ENCODE measurements at regions of chr17 and their contacts with region 1.

Region 1: DNA sequence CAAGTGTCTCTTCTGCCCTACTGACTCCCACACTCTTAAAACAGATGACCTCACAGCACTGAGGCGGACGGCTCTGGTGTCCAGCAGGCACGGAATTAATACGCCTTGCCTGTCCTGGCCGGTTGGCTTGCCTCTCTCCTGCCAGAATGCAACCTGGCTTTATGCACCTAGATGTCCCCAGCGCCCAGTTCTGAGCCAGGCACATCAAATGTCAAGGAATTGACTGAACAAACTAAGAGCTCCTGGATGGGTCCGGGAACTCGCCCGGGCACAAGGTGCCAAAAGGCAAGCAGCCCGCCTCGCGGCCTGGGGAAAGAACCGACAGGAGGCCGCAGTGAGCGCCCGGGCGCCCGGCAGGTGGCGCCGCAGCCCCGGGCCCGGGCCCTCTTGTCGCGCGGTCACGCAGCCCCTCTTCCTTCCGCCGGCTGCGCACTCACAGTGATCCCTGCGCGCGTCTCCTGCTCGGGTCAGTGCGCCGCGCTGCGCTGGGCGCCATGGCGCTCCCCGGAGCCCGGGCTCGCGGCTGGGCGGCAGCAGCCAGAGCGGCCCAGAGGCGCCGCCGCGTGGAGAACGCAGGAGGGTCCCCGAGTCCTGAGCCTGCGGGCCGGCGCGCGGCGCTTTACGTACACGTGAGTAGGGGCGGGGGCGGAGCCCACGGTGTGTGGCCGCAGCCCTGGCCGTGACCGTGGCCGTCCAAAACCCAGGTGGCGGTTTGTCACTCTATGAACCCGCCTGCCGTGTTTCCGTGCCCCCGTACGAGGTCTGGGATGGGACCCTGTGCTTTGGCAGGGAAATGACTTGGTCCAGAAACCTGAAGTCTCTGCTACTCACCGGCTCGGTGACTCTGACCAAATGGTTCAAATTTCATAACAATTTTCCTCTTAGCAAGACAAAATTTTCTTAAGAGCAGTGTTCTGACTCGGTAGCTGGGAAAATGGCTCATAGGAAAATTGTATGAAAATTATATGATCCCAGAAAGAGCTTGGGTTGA is at the start of gene RSAD1:
- DNase-seq: peak; percentile 72 to 84 (median 79)
- ATAC-seq: peak; percentile 95
- H3K4me3 ChIP-seq: peak within 1 kb of the TSS; percentile 98
- H3K4me3 Mint-ChIP-seq: peak within 1 kb of the TSS; percentile 79 to 93 (median 90)
- H3K27ac ChIP-seq: peak within 1 kb of the TSS; percentile 75
- H3K27ac Mint-ChIP-seq: peak within 1 kb of the TSS; percentile 68 to 96 (median 92)
- H3K4me1 ChIP-seq: peaks cover 11 to 12% of the 10 kb centered on the region in 2 donors
- H3K4me1 Mint-ChIP-seq: peaks cover 19 to 28% (median 23%) of the 10 kb centered on the region in 7 donors
- H3K27me3 ChIP-seq: no peaks in the 10 kb centered on the region
- H3K27me3 Mint-ChIP-seq: peaks cover 0 to 6% (median 0%) of the 10 kb centered on the region in 5 donors
- total RNA-seq, gene RSAD1: 38.3 to 91.0 (median 54.6) TPM

Region 2: DNA sequence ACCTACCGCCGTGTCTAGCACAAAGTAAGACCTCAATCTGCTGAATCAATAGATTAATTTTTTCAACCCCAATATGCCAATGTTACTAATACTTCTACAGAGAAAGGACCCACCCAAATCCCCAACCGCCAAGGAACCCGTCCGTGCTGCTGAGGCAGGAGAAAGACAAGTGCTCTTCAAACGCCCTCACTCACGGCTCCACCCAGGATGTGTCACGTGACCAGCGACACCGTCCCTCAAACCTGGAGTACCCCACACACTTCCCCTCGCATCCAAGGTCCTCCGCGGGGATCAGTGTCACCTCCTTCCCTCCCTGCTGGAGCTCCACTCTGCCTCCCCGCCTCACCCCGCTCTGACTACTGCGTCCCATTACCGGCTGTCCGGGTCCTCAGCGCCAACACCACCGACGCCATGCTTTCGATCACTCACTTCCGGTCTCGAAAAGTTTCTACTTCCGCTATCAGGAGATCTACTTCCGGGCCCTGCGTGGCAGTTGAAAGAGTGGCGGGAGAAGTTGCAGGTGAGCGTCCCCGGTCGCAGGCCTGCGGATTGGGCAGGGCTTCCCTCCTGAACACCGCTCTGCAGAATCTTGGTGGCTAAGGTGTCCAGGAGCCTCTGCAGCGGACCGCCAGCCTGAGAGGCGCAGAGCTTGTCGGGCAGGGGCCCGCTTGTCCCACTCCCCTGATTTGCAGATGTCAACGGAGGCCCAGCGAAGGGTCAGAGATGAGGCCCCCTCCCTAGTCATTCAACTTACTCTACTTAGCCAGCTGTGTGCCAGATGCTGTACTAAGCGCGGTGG is 105.7 kb before region 1 on chr17 and contains the starts of genes EME1 and MRPL27:
- CTCF ChIA-PET with region 1: no interaction called
- POLR2A ChIA-PET with region 1: no interaction called
- intact Hi-C with region 1: loop called in 1 of 2 experiments (anchors 1 kb)
- DNase-seq: peak; percentile 81 to 95 (median 92)
- ATAC-seq: peak; percentile 94
- H3K4me3 ChIP-seq: peak within 1 kb of the TSS; percentile 99
- H3K4me3 Mint-ChIP-seq: peak within 1 kb of the TSS; percentile 92 to 100 (median 98)
- H3K27ac ChIP-seq: peak within 1 kb of the TSS; percentile 99
- H3K27ac Mint-ChIP-seq: peak within 1 kb of the TSS; percentile 97 to 100 (median 99)
- H3K4me1 ChIP-seq: peaks cover 9 to 13% of the 10 kb centered on the region in 2 donors
- H3K4me1 Mint-ChIP-seq: peaks cover 18 to 41% (median 31%) of the 10 kb centered on the region in 7 donors
- H3K27me3 ChIP-seq: no peaks in the 10 kb centered on the region
- H3K27me3 Mint-ChIP-seq: no peaks in the 10 kb centered on the region
- total RNA-seq, gene EME1: 0.61 to 17.5 (median 2.2) TPM
- total RNA-seq, gene MRPL27: 29.5 to 64.7 (median 32.0) TPM

Region 3: GRCh38 chr17:50501054-50501453 is 22.4 kb after region 1 on chr17:
- CTCF ChIA-PET with region 1: interaction called, 13 read pairs
- POLR2A ChIA-PET with region 1: interaction called, 5 read pairs
- intact Hi-C with region 1: loop called (anchors 1 kb)
- DNase-seq: peak in 1 of 9 donors; percentile 18
- ATAC-seq: no peak
- H3K4me3 ChIP-seq: no peak overlapping the region
- H3K4me3 Mint-ChIP-seq: no peak overlapping the region
- H3K27ac ChIP-seq: no peak overlapping the region
- H3K27ac Mint-ChIP-seq: no peak overlapping the region
- H3K4me1 ChIP-seq: peaks cover 0 to 8% of the 10 kb centered on the region in 2 donors
- H3K4me1 Mint-ChIP-seq: peaks cover 0 to 23% (median 13%) of the 10 kb centered on the region in 7 donors
- H3K27me3 ChIP-seq: no peaks in the 10 kb centered on the region
- H3K27me3 Mint-ChIP-seq: peaks cover 0 to 3% (median 0%) of the 10 kb centered on the region in 5 donors

Region 4: GRCh38 chr17:50547035-50547735 is 68.5 kb after region 1 on chr17 and contains the start of gene SPATA20:
- CTCF ChIA-PET with region 1: interaction called, 5 read pairs
- POLR2A ChIA-PET with region 1: interaction called, 3 read pairs
- intact Hi-C with region 1: loop called (anchors 1 kb)
- DNase-seq: peak; percentile 73 to 86 (median 83)
- ATAC-seq: peak; percentile 90
- H3K4me3 ChIP-seq: peak within 1 kb of the TSS; percentile 65
- H3K4me3 Mint-ChIP-seq: peak within 1 kb of the TSS; percentile 52 to 85 (median 76)
- H3K27ac ChIP-seq: peak within 1 kb of the TSS; percentile 66
- H3K27ac Mint-ChIP-seq: peak within 1 kb of the TSS in 5 of 9 donors; percentile 37 to 87 (median 81)
- H3K4me1 ChIP-seq: peaks cover 11% of the 10 kb centered on the region in 2 donors
- H3K4me1 Mint-ChIP-seq: peaks cover 0 to 25% (median 20%) of the 10 kb centered on the region in 7 donors
- H3K27me3 ChIP-seq: no peaks in the 10 kb centered on the region
- H3K27me3 Mint-ChIP-seq: peaks cover 0 to 28% (median 7%) of the 10 kb centered on the region in 5 donors
- total RNA-seq, gene SPATA20: 14.3 to 19.4 (median 16.4) TPM

Region 5: DNA sequence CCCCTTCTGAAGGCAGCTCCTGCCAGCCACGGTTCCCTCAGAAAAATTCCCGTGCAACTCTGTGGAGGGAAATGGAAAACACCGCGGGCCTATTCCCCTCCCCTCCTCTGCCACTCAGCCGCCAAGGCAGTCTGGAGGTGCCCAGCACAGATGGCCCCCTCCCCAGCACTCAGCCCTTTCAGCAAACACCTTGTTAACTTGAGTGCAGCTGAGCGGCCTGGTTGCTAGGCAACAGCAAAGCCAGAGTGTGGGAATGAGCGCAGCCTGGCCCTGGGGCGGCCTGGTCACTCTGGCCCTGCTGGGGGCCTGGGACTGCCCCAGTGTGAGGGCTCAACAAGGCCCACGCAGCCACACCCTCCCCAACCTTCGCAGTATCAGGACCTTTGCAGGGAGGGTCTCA is 114.6 kb after region 1 on chr17:
- CTCF ChIA-PET with region 1: no interaction called
- POLR2A ChIA-PET with region 1: no interaction called
- intact Hi-C with region 1: no loop called
- DNase-seq: no peak
- ATAC-seq: no peak
- H3K4me3 ChIP-seq: no peak overlapping the region
- H3K4me3 Mint-ChIP-seq: no peak overlapping the region
- H3K27ac ChIP-seq: no peak overlapping the region
- H3K27ac Mint-ChIP-seq: no peak overlapping the region
- H3K4me1 ChIP-seq: no peaks in the 10 kb centered on the region
- H3K4me1 Mint-ChIP-seq: no peaks in the 10 kb centered on the region
- H3K27me3 ChIP-seq: no peaks in the 10 kb centered on the region
- H3K27me3 Mint-ChIP-seq: peaks cover 0 to 3% (median 0%) of the 10 kb centered on the region in 5 donors

Region 6: DNA sequence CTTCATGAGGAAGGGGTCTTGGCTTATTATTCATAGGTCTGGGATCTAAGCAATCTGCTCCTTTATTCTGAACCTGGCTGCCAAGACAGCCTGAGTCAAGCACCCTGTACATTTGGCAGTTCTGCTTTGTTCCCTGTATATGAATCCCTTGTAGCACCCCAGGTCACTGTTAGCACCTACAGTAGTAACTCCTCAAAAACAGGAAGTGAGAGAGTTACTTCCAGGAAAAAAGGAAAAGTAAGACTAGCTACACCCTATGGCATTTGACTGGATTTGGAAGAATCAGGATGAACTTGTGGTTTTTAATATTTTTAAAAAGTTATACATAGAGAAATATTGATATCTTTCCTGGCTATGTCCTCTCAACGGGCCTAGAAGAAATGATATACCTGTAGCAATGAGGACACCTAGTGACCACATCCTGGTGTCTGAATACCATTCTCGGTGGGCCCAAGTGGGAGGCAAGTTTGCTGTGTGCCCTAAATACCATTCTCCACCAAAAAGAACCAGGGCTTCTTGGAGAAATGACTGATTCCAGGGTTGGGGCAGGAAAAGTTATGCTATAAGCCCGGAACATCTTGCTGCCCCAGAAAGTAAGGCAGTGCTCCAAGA is 219.1 kb after region 1 on chr17:
- CTCF ChIA-PET with region 1: no interaction called
- POLR2A ChIA-PET with region 1: no interaction called
- intact Hi-C with region 1: loop called (anchors 1 to 2 kb)
- DNase-seq: no peak
- ATAC-seq: no peak
- H3K4me3 ChIP-seq: no peak overlapping the region
- H3K4me3 Mint-ChIP-seq: no peak overlapping the region
- H3K27ac ChIP-seq: no peak overlapping the region
- H3K27ac Mint-ChIP-seq: peak overlapping the region in 7 of 9 donors; percentile 8 to 76 (median 65)
- H3K4me1 ChIP-seq: peaks cover 0 to 5% of the 10 kb centered on the region in 2 donors
- H3K4me1 Mint-ChIP-seq: peaks cover 0 to 33% (median 30%) of the 10 kb centered on the region in 7 donors
- H3K27me3 ChIP-seq: no peaks in the 10 kb centered on the region
- H3K27me3 Mint-ChIP-seq: no peaks in the 10 kb centered on the region

Region 7: DNA sequence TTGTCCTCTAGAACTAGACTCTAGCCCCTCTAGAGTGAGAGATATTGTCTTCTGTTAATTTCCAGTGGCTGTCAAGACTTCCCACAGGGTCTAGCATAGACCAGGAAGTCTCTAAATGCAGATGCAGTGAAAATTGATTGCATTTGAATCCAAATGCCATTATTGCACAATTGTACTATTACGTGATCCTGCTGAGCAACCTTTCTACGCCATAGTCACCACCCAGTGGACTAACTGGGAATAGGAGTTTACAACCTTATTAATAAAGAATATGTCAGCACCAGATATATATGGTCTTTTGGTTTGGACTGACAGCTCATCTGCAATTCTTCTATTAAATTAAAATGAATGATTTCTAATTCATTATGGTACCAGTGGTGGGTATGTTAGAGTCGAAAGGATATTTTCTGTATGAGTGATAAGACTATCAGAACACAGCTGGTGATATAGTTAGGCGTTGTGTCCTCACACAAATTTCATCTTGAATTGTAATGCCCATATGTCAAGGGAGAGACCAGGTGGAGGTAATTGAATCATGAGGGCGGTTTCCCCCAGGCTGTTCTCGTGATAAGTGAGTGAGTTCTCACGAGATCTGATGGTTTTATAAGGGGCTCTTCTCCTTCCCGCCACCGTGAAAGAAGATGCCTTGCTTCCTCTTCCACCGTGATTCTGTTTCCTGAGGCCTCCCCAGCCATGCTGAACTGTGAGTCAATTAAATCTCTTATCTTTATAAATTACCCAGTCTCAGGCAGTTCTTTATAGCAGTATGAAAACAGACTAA is 1818.7 kb after region 1 on chr17:
- CTCF ChIA-PET with region 1: no interaction called
- POLR2A ChIA-PET with region 1: no interaction called
- intact Hi-C with region 1: no loop called
- DNase-seq: no peak
- ATAC-seq: no peak
- H3K4me3 ChIP-seq: no peak overlapping the region
- H3K4me3 Mint-ChIP-seq: no peak overlapping the region
- H3K27ac ChIP-seq: no peak overlapping the region
- H3K27ac Mint-ChIP-seq: no peak overlapping the region
- H3K4me1 ChIP-seq: no peaks in the 10 kb centered on the region
- H3K4me1 Mint-ChIP-seq: no peaks in the 10 kb centered on the region
- H3K27me3 ChIP-seq: no peaks in the 10 kb centered on the region
- H3K27me3 Mint-ChIP-seq: peaks cover 0 to 6% (median 0%) of the 10 kb centered on the region in 5 donors